Calu3 (cell line): ENCODE measurements at regions of chr7 and their contacts with region 1.

Region 1: GRCh38 chr7:74141705-74142104 is 32.5 kb upstream of the EIF4H start:
- DNase-seq: no peak
- H3K4me3 Mint-ChIP-seq: no peak overlapping the region
- H3K27ac Mint-ChIP-seq: no peak overlapping the region
- H3K4me1 Mint-ChIP-seq: no peaks in the 10 kb centered on the region
- H3K27me3 Mint-ChIP-seq: no peaks in the 10 kb centered on the region
- CTCF ChIP-seq: no peak

Region 2: DNA sequence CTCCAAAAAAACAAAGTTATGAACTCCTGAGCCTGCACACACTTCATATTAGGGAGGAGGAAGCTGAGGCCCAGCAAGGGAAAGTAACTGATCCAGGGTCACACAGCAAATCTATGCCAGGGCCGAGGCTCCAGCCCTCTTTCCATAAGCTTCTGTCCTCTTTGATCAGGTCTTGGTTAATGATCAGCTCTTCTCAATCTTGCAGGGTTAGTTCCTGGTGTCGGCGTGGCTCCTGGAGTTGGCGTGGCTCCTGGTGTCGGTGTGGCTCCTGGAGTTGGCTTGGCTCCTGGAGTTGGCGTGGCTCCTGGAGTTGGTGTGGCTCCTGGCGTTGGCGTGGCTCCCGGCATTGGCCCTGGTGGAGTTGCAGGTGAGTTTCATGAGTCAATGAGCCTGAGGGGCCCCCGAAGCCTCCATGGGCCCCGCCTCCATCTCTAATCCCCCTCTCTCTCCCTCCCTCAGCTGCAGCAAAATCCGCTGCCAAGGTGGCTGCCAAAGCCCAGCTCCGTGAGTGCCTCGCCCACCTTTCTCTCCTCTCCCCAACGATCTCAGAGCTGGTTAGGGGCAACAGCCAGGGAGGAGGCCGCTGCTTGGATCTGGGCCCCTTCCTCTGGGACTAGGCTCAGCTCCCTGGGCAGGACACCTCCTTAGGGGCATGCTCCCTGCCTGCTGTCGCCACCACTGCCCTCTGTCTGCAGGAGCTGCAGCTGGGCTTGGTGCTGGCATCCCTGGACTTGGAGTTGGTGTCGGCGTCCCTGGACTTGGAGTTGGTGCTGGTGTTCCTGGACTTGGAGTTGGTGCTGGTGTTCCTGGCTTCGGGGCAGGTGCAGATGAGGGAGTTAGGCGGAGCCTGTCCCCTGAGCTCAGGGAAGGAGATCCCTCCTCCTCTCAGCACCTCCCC is 81.8 kb before region 1 on chr7:
- CTCF ChIA-PET with region 1: interaction called, 10 read pairs
- intact Hi-C with region 1: no loop called
- DNase-seq: peak; percentile 67
- H3K4me3 Mint-ChIP-seq: peak overlapping the region; percentile 61
- H3K27ac Mint-ChIP-seq: peak overlapping the region; percentile 79
- H3K4me1 Mint-ChIP-seq: peaks cover 12% of the 10 kb centered on the region
- H3K27me3 Mint-ChIP-seq: peaks cover 16% of the 10 kb centered on the region
- CTCF ChIP-seq: no peak